Activated naive CD4-positive, alpha-beta T cell treated with anti-CD3 and anti-CD28 coated beads for 36 hours (primary cell): ENCODE measurements at regions of chr1 and their contacts with region 1.

Region 1: DNA sequence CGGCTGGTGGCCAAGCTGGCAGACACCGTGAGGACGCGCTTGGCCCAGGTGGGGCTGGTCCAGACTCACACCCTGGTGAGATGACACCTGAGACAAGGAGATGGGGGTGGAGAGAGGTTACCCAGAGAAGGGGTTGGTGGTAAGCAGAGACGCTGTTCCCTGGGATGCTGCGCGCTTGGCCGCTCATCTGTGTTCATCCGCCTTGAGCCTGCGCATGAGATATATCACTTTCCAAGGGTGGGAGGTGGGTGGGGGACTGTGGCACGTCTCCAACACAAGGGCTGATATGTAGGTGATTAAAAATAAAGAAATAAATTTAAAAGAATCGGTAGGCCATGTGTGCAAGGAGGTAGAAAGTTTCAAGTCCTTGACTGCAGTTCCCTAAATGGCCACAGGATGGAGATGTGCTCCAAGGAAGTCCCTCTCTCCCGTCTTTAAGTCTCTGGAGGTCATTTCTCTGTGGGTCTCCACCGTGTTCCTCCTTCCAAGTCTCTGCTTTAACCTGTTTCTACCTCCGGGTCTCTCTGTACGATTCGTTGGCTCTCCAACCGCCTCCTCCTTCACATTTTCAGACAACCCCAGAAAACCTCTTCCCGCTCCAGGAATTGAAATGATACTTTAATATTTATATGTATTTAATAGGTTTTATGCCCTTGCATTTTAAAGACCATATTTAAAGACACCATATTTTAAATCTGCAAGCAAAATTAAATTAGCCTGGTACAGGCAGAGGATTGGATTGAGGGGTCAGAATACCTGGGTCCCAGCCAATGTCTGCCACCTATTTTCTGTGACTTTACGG is 4.5 kb downstream of the TTC24 start:
- DNase-seq: peak; percentile 92
- H3K4me3 Mint-ChIP-seq: no peak overlapping the region
- H3K27ac Mint-ChIP-seq: no peak overlapping the region
- H3K4me1 Mint-ChIP-seq: peaks cover 27% of the 10 kb centered on the region
- H3K27me3 Mint-ChIP-seq: no peaks in the 10 kb centered on the region

Region 2: GRCh38 chr1:156456622-156457465 is 127.2 kb before region 1 on chr1:
- CTCF ChIA-PET with region 1: interaction called, 3 read pairs
- intact Hi-C with region 1: loop called (anchors 1 kb)
- DNase-seq: peak; percentile 100
- H3K4me3 Mint-ChIP-seq: peak overlapping the region; percentile 86
- H3K27ac Mint-ChIP-seq: peak overlapping the region; percentile 97
- H3K4me1 Mint-ChIP-seq: peaks cover 10% of the 10 kb centered on the region
- H3K27me3 Mint-ChIP-seq: no peaks in the 10 kb centered on the region

Region 3: GRCh38 chr1:156571949-156572662 is 11.9 kb before region 1 on chr1 and contains the start of gene IQGAP3:
- CTCF ChIA-PET with region 1: interaction called, 11 read pairs
- intact Hi-C with region 1: no loop called
- DNase-seq: peak; percentile 79
- H3K4me3 Mint-ChIP-seq: peak within 1 kb of the TSS; percentile 93
- H3K27ac Mint-ChIP-seq: peak within 1 kb of the TSS; percentile 6
- H3K4me1 Mint-ChIP-seq: peaks cover 18% of the 10 kb centered on the region
- H3K27me3 Mint-ChIP-seq: peaks cover 30% of the 10 kb centered on the region
- total RNA-seq, gene IQGAP3: 9.4 to 10.6 TPM

Region 4: DNA sequence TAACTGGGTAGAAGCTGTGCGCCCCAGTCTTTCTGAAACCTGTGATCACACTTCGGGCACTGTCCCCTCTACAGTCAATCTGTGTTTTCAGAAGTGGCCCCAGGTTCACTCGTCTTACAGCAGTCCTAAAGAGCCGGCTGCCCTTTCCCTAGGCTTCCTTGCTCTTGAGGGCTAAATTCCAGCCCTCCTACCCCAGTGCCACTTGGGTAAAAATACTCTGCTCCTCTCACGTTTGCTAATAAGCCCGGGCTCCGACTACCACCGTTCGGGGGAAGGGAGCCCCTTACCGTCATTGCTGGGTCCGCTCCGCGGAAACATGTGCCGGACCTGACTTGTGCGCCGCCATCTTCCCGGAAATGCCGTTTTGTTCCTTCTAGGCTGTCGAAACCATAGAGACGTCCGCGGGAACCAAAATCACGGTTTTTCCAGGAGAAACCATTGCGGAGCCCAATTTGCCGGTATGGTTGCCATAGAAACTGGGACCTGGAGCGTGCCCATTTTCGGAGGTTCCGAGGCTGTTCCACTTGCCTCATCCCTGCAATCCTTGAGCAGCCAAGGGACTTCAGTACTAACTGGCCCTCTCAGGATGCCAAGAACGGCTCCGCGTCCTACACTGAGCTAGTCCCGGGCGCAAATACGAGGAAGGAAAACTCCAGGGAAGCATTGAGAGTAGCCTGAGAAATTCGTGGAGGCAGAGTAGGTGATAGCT is 17.3 kb after region 1 on chr1 and contains the start of gene GPATCH4:
- CTCF ChIA-PET with region 1: interaction called, 10 read pairs
- intact Hi-C with region 1: loop called (anchors 2 kb)
- DNase-seq: peak; percentile 89
- H3K4me3 Mint-ChIP-seq: peak within 1 kb of the TSS; percentile 91
- H3K27ac Mint-ChIP-seq: peak within 1 kb of the TSS; percentile 97
- H3K4me1 Mint-ChIP-seq: peaks cover 47% of the 10 kb centered on the region
- H3K27me3 Mint-ChIP-seq: no peaks in the 10 kb centered on the region
- total RNA-seq, gene GPATCH4: 37.5 to 38.3 TPM

Region 5: GRCh38 chr1:156608036-156608674 is 24.1 kb after region 1 on chr1:
- CTCF ChIA-PET with region 1: interaction called, 24 read pairs
- intact Hi-C with region 1: loop called (anchors 1 kb)
- DNase-seq: peak; percentile 85
- H3K4me3 Mint-ChIP-seq: no peak overlapping the region
- H3K27ac Mint-ChIP-seq: no peak overlapping the region
- H3K4me1 Mint-ChIP-seq: peaks cover 10% of the 10 kb centered on the region
- H3K27me3 Mint-ChIP-seq: peaks cover 2% of the 10 kb centered on the region

Region 6: GRCh38 chr1:157176591-157177121 is 592.6 kb after region 1 on chr1:
- CTCF ChIA-PET with region 1: no interaction called
- intact Hi-C with region 1: no loop called
- DNase-seq: no peak
- H3K4me3 Mint-ChIP-seq: no peak overlapping the region
- H3K27ac Mint-ChIP-seq: no peak overlapping the region
- H3K4me1 Mint-ChIP-seq: no peaks in the 10 kb centered on the region
- H3K27me3 Mint-ChIP-seq: peaks cover 17% of the 10 kb centered on the region